ENCODE measurements at regions of chr2 and their contacts with region 1.

Region 1: GRCh38 chr2:20578895-20579825 is 71.7 kb downstream of the HS1BP3 start:
- DNase-seq: peak; percentile 100
- ATAC-seq: peak; percentile 83
- H3K4me3 ChIP-seq: 0 out of 6 replicates have a peak overlapping the region, but pooled peaks of 1 of the 3 experiments have one; percentile 0
- H3K27ac ChIP-seq: peak overlapping the region; percentile 97
- H3K4me1 ChIP-seq: peaks cover 98% of the 10 kb centered on the region
- H3K27me3 ChIP-seq: no peaks in the 10 kb centered on the region
- CTCF ChIP-seq: peak; percentile 21; the same call in 1 of the 2 replicates
- EP300 ChIP-seq: peak; percentile 93 to 98
- POLR2A ChIP-seq: peak in 1 of 2 experiments; percentile 49; a peak in 1 of 4 replicates
- RAD21 ChIP-seq: peak; percentile 75

Region 2: GRCh38 chr2:20507166-20507692 is 71.9 kb before region 1 on chr2:
- CTCF ChIA-PET with region 1: no interaction called
- POLR2A ChIA-PET with region 1: interaction called, 19 read pairs
- in situ Hi-C with region 1: no loop called
- intact Hi-C with region 1: no loop called
- DNase-seq: no peak
- ATAC-seq: peak; percentile 55
- H3K4me3 ChIP-seq: no peak overlapping the region
- H3K27ac ChIP-seq: peak overlapping the region; percentile 14
- H3K4me1 ChIP-seq: peaks cover 71% of the 10 kb centered on the region
- H3K27me3 ChIP-seq: no peaks in the 10 kb centered on the region
- CTCF ChIP-seq: no peak
- EP300 ChIP-seq: no peak
- POLR2A ChIP-seq: no peak
- RAD21 ChIP-seq: no peak

Region 3: GRCh38 chr2:20525041-20526035 is 53.8 kb before region 1 on chr2:
- CTCF ChIA-PET with region 1: no interaction called
- POLR2A ChIA-PET with region 1: interaction called, 68 read pairs
- in situ Hi-C with region 1: no loop called
- intact Hi-C with region 1: loop called (anchors 1 kb)
- DNase-seq: peak; percentile 96
- ATAC-seq: peak; percentile 96
- H3K4me3 ChIP-seq: peak overlapping the region; percentile 2 to 56 (median 21); a peak in 5 of 6 replicates
- H3K27ac ChIP-seq: peak overlapping the region; percentile 69
- H3K4me1 ChIP-seq: peaks cover 81% of the 10 kb centered on the region
- H3K27me3 ChIP-seq: no peaks in the 10 kb centered on the region
- CTCF ChIP-seq: peak; percentile 80
- EP300 ChIP-seq: peak; percentile 48 to 53; a peak in 3 of 4 replicates
- POLR2A ChIP-seq: peak in 1 of 2 experiments; percentile 70; a peak in 2 of 4 replicates
- RAD21 ChIP-seq: peak; percentile 82

Region 4: GRCh38 chr2:20532634-20533437 is 46.3 kb before region 1 on chr2:
- CTCF ChIA-PET with region 1: no interaction called
- POLR2A ChIA-PET with region 1: interaction called, 127 read pairs
- in situ Hi-C with region 1: no loop called
- intact Hi-C with region 1: no loop called
- DNase-seq: peak; percentile 72
- ATAC-seq: peak; percentile 73
- H3K4me3 ChIP-seq: no peak overlapping the region; a peak in 1 of 6 replicates
- H3K27ac ChIP-seq: peak overlapping the region; percentile 59
- H3K4me1 ChIP-seq: peaks cover 88% of the 10 kb centered on the region
- H3K27me3 ChIP-seq: no peaks in the 10 kb centered on the region
- CTCF ChIP-seq: no peak
- EP300 ChIP-seq: peak in 1 of 2 experiments; percentile 78; a peak in 1 of 4 replicates
- POLR2A ChIP-seq: no peak
- RAD21 ChIP-seq: 0 out of 2 replicates have a peak, but pooled peaks have one; percentile 22

Region 5: DNA sequence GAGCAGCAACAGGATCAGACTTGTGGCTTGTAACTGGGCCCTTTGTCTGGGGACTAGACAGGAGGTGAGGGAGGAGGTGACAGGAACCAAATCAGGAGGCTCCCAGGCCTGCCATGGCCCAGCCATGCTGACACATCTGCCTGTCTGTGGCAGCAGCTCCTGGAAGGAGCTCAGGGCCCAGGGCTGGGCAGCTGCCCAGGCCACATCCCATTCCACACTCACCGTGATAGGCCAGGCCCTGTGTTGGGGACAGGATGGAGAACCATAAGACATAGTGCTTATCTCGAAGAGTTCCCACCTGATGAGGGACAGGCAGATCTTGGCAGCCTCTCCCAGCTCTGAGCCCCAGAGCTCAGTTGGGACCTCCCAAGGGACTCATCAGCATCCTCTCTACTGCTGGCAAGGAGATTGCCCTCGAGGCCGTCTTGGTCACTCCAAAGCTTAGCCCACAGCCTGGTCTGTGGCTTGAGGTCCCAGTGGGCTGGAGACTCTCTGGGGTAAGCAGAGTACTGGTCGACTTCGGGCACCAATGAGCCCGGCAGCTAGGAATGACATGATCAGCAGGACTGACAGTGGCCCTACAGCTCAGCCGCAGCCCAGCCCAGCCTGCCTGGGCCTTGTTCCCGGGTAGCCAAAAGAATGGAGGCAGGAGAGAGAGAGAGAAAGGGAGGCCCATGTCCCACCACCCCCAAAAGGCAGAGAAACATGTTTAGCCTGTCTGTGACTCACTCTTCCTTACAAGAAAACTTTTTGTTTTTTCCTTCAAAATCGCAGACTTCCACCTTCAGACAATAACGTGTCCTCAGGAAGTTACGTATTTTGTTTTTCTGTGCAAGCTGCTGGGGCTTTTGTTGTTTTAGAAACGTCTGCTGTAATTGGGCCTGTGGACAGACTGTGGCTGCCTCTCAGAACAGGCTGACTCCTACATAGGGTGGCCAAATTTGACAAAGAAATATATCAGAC is 10.4 kb before region 1 on chr2:
- CTCF ChIA-PET with region 1: no interaction called
- POLR2A ChIA-PET with region 1: interaction called, 32 read pairs
- in situ Hi-C with region 1: no loop called
- intact Hi-C with region 1: no loop called
- DNase-seq: no peak
- ATAC-seq: no peak
- H3K4me3 ChIP-seq: no peak overlapping the region
- H3K27ac ChIP-seq: peak overlapping the region; percentile 49
- H3K4me1 ChIP-seq: peaks cover 96% of the 10 kb centered on the region
- H3K27me3 ChIP-seq: no peaks in the 10 kb centered on the region
- CTCF ChIP-seq: no peak
- EP300 ChIP-seq: no peak
- POLR2A ChIP-seq: no peak
- RAD21 ChIP-seq: no peak

Region 6: GRCh38 chr2:20611077-20611843 is 32.1 kb after region 1 on chr2:
- CTCF ChIA-PET with region 1: no interaction called
- POLR2A ChIA-PET with region 1: interaction called, 33 read pairs
- in situ Hi-C with region 1: no loop called
- intact Hi-C with region 1: loop called (anchors 1 kb)
- DNase-seq: peak; percentile 100
- ATAC-seq: peak; percentile 94
- H3K4me3 ChIP-seq: peak overlapping the region in 1 of 3 experiments; percentile 35; a peak in 3 of 6 replicates
- H3K27ac ChIP-seq: peak overlapping the region; percentile 95
- H3K4me1 ChIP-seq: peaks cover 78% of the 10 kb centered on the region
- H3K27me3 ChIP-seq: no peaks in the 10 kb centered on the region
- CTCF ChIP-seq: peak; percentile 15; the same call in 1 of the 2 replicates
- EP300 ChIP-seq: peak; percentile 92 to 97
- POLR2A ChIP-seq: peak in 1 of 2 experiments; percentile 81; a peak in 2 of 4 replicates
- RAD21 ChIP-seq: peak; percentile 57

Region 7: DNA sequence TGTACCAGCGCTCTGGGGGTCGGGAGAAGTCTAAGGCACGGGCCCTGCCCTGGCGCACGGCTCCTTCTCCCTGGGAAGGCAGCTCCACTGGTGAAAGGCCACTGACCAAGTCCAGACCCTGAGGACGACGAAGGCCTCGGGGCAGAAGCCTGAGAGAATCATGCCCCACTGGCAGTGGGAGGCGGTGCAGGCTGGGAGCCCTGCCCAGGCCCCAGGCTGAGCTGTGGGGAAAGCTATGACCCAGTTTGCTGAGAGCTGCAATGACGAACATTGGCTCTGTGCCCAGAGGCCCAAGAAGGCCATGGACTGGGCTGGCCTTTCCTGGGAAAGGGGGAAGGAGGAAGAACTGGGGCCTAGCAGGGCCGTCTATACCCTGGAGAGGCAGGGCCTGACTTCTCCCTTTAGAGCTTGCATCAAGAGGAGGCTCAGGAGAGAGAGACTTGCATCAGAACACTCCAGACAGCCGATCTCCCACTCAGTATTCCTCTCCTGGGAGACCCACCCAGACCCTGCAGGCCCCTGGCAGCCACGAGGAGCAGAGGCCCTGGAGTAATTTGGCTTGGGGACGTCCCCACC is 38.8 kb after region 1 on chr2:
- CTCF ChIA-PET with region 1: no interaction called
- POLR2A ChIA-PET with region 1: interaction called, 30 read pairs
- in situ Hi-C with region 1: no loop called
- intact Hi-C with region 1: loop called (anchors 1 kb)
- DNase-seq: peak; percentile 94
- ATAC-seq: peak; percentile 92
- H3K4me3 ChIP-seq: no peak overlapping the region
- H3K27ac ChIP-seq: peak overlapping the region; percentile 95
- H3K4me1 ChIP-seq: peaks cover 63% of the 10 kb centered on the region
- H3K27me3 ChIP-seq: no peaks in the 10 kb centered on the region
- CTCF ChIP-seq: peak; percentile 60
- EP300 ChIP-seq: peak; percentile 49 to 56; a peak in 2 of 4 replicates
- POLR2A ChIP-seq: peak in 1 of 2 experiments; percentile 53; a peak in 1 of 4 replicates
- RAD21 ChIP-seq: peak; percentile 92

Region 8: DNA sequence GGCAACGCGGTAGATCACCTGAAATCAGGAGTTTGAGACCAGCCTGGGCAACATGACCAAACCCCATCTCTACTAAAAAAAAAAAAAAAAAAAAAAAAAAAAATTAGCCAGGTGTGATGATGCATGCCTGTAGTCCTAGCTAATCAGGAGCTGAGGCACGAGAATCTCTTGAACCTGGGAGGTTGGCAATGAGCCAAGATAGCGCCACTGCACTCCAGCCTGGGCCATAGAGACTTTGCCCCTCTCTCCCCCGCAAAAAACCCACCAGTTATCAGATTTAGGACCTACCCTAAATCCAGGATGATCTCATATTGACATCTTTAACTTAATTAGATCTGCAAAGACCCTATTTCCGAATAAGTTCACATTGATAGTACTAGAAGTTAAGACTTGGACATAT is 273.0 kb after region 1 on chr2:
- CTCF ChIA-PET with region 1: no interaction called
- POLR2A ChIA-PET with region 1: no interaction called
- in situ Hi-C with region 1: no loop called
- intact Hi-C with region 1: no loop called
- DNase-seq: no peak
- ATAC-seq: no peak
- H3K4me3 ChIP-seq: no peak overlapping the region
- H3K27ac ChIP-seq: no peak overlapping the region
- H3K4me1 ChIP-seq: no peaks in the 10 kb centered on the region
- H3K27me3 ChIP-seq: peaks cover 2 to 17% of the 10 kb centered on the region in 2 experiments; a peak in 3 of 5 replicates
- CTCF ChIP-seq: no peak
- EP300 ChIP-seq: no peak
- POLR2A ChIP-seq: no peak
- RAD21 ChIP-seq: no peak

Region 9: GRCh38 chr2:21567395-21567794 is 988.2 kb after region 1 on chr2:
- CTCF ChIA-PET with region 1: no interaction called
- POLR2A ChIA-PET with region 1: no interaction called
- in situ Hi-C with region 1: no loop called
- intact Hi-C with region 1: no loop called
- DNase-seq: no peak
- ATAC-seq: no peak
- H3K4me3 ChIP-seq: no peak overlapping the region
- H3K27ac ChIP-seq: no peak overlapping the region
- H3K4me1 ChIP-seq: no peaks in the 10 kb centered on the region
- H3K27me3 ChIP-seq: no peaks in the 10 kb centered on the region
- CTCF ChIP-seq: no peak
- EP300 ChIP-seq: no peak
- POLR2A ChIP-seq: no peak
- RAD21 ChIP-seq: no peak